ENCODE measurements at regions of chr18 and their contacts with region 1.

Region 1: DNA sequence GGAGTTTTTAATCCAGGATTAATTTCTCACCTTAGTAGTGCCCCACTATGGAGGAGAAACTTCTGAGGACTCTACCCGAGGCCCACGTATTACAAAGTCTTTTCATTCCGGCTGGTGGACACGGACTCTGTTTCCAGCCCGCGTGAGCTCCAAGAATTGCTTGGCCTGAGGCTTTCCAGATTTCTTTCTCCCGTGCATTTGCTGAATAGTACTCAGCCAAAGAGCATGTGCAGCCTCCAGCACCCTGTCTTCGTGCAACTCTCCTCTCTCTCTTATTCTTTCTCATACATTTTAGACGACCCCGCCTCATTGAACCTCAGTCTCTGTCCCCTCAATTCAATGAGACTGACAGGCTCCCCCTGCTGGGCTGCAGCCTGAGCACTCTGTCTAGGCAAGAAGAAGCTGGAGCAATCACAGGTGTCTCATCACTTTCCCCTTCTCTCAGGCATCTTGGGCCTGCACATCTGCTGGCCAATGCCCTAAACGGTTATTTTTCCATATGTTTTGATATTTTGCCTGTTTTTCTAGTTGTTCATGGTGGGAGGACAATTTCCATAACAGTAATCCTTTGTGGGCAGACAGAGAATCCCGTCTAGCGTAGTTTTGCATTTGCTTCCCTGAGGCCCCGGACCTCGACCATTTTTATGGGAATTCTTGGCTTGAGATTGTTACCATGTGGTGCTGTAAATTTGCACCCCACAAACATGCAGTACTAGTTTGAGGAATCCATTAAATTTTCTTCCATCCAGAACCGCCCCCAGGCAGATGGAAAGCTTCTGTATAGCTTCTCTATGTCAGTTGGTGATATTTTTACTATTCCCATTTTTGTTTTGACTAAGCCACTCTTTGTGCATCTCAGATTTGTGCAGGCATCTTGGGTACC is 50.1 kb upstream of the LPIN2 start:
- DNase-seq: peak; percentile 55
- CTCF ChIP-seq: peak; percentile 88

Region 2: DNA sequence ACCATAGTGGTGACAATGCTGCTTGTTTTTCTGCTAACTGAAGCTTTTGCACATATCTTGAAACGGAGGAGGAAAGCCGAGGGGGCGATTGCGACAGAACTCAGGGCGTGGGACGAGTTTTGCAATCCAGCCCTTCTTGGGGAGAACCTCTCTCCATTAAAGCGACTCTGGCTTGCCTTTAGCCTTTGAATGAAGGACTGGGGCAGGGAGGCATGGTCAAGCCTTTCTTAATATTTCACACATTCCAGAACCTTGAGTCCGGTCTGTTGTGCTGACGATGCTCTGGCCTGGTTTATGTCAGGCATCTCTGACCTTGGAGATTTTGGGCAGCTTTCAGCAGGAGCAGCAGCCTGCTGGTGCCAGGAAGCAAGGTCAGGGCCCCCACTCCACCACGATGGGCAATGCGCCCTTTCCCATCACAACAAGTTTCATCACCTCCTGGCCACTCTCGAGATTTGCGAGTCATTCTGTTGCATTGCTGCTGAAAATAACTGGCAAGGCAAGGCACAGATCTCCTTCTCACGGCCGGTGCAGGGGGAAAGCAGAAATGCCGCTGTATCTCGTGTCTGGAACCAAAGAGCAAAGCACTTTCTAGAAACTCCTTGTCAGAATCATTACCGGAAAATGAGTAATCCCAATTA is 205.4 kb before region 1 on chr18:
- CTCF ChIA-PET with region 1: no interaction called
- POLR2A ChIA-PET with region 1: no interaction called
- DNase-seq: no peak
- CTCF ChIP-seq: no peak

Region 3: GRCh38 chr18:2994603-2995432 is 68.2 kb before region 1 on chr18:
- CTCF ChIA-PET with region 1: interaction called, 36 read pairs
- POLR2A ChIA-PET with region 1: no interaction called
- DNase-seq: peak; percentile 60
- CTCF ChIP-seq: peak; percentile 68

Region 4: DNA sequence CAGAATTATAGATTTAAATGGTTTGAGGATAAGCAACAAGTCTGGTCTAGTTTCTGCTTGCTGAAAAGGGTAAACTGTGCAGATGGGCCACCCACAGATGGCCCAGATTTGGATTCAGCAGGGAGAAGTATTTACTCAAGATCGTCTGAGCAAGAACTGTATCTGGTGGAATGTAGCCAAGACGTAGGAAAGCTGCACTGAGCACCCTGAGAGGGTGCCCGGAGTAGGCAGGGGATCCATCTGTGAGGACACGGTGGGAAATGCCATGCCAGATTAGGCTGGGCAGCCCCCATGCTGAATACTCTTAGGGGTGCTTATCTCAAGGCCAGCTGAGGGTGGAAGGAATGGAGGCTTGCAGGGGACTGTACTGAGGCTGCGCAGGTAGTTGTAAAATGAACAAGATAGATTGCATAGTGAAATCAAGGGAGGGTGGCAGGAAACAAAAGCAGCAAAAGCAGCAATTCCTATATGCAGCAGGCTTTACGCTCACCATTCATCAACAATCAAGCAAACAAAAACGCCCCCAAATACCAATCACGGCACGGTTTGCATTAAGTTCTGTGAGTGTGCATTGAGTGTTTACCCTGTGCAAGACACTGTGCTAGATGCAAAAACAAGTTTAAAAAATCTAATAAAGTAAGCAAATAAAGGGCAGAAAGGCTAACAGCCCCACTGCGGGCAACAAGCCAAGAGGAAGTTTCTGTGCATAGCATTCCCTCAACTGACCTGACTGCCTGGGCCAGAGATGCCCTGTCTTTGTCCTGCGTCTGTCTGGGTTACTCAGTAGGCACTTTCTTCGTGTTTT is 17.9 kb before region 1 on chr18:
- CTCF ChIA-PET with region 1: interaction called, 26 read pairs
- POLR2A ChIA-PET with region 1: no interaction called
- DNase-seq: no peak
- CTCF ChIP-seq: no peak

Region 5: DNA sequence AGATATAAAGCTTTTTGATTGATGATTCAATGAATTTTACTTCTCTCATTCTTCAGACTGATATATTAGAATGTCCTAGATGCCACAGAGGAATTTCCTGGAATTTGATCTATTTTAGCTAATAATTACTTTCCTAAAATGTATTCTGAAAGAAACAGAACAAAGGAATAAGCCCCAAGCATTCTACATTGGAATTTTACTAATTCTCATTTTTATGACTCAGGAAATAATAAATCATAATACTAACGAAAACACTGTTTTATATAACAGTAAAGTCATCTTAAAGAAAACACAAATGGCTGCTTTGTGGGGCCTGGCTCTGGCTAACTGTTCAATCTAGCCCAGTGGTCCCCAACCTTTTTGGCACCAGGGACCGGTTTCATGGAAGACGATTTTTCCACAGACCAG is 18.5 kb after region 1 on chr18:
- CTCF ChIA-PET with region 1: interaction called, 74 read pairs
- POLR2A ChIA-PET with region 1: no interaction called
- DNase-seq: no peak
- CTCF ChIP-seq: no peak

Region 6: GRCh38 chr18:3129053-3129864 is 66.2 kb after region 1 on chr18:
- CTCF ChIA-PET with region 1: interaction called, 24 read pairs
- POLR2A ChIA-PET with region 1: no interaction called
- DNase-seq: peak; percentile 81
- CTCF ChIP-seq: peak; percentile 95

Region 7: GRCh38 chr18:3265564-3266033 is 202.6 kb after region 1 on chr18:
- CTCF ChIA-PET with region 1: no interaction called
- POLR2A ChIA-PET with region 1: no interaction called
- DNase-seq: no peak
- CTCF ChIP-seq: no peak

Region 8: DNA sequence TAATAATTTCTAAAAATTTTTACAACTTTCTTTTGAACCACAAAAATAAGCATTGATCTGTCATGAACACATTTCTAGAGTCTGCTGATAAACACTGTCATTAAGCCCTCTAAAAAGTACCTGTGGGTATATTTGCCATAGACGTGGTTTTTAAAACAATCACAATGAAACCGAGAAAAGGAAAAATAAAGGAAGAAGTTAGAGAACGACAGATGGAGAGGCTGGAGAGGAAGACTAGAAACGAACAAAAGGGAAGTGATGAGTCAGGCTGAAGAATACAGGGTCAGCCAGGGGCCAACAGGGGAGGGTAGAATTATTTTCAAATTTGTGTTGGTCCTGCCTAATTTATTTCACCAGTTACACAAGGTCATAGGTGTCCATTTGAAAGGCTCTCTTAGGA is 260.9 kb after region 1 on chr18:
- CTCF ChIA-PET with region 1: no interaction called
- POLR2A ChIA-PET with region 1: no interaction called
- DNase-seq: peak; percentile 31
- CTCF ChIP-seq: no peak

Measured in GM10248 (cell line).